Thyroid gland (tissue), 4 donors: ENCODE measurements at regions of chr3 and their contacts with region 1.

Region 1: GRCh38 chr3:101803173-101803782 is 24.3 kb downstream of the NXPE3 start:
- DNase-seq: peak; percentile 23 to 38
- H3K4me3 ChIP-seq: no peak overlapping the region
- H3K27ac ChIP-seq: no peak overlapping the region
- H3K4me1 ChIP-seq: no peaks in the 10 kb centered on the region
- H3K27me3 ChIP-seq: no peaks in the 10 kb centered on the region
- CTCF ChIP-seq: peak; percentile 35 to 86 (median 78)
- POLR2A ChIP-seq: no peak

Region 2: GRCh38 chr3:101381809-101382208 is 421.5 kb before region 1 on chr3:
- intact Hi-C with region 1: no loop called
- DNase-seq: no peak
- H3K4me3 ChIP-seq: no peak overlapping the region
- H3K27ac ChIP-seq: no peak overlapping the region
- H3K4me1 ChIP-seq: peaks cover 11 to 17% of the 10 kb centered on the region in 2 donors
- H3K27me3 ChIP-seq: no peaks in the 10 kb centered on the region
- CTCF ChIP-seq: peak in 3 of 6 experiments; percentile 45 to 54 (median 52)
- POLR2A ChIP-seq: no peak

Region 3: GRCh38 chr3:102536456-102536855 is 733.2 kb after region 1 on chr3:
- intact Hi-C with region 1: loop called (anchors 10 kb)
- DNase-seq: peak; percentile 12 to 13
- H3K4me3 ChIP-seq: no peak overlapping the region
- H3K27ac ChIP-seq: no peak overlapping the region
- H3K4me1 ChIP-seq: peaks cover 6 to 7% of the 10 kb centered on the region in 2 donors
- H3K27me3 ChIP-seq: no peaks in the 10 kb centered on the region
- CTCF ChIP-seq: peak in 3 of 6 experiments; percentile 42 to 60 (median 52)
- POLR2A ChIP-seq: no peak